OCI-LY7 (cell line): ENCODE measurements at regions of chr3 and their contacts with region 1.

Region 1: GRCh38 chr3:188082031-188082430 is 71.9 kb upstream of the LPP start:
- DNase-seq: no peak
- H3K4me3 ChIP-seq: no peak overlapping the region
- H3K27ac ChIP-seq: no peak overlapping the region
- H3K4me1 ChIP-seq: peaks cover 56% of the 10 kb centered on the region
- CTCF ChIP-seq: no peak

Region 2: GRCh38 chr3:187738331-187739093 is 343.5 kb before region 1 on chr3:
- CTCF ChIA-PET with region 1: interaction called, 4 read pairs
- POLR2A ChIA-PET with region 1: interaction called, 9 read pairs
- intact Hi-C with region 1: loop called (anchors 1 kb)
- DNase-seq: peak; percentile 76
- H3K4me3 ChIP-seq: peak overlapping the region; percentile 86
- H3K27ac ChIP-seq: peak overlapping the region; percentile 90
- H3K4me1 ChIP-seq: peaks cover 60% of the 10 kb centered on the region
- CTCF ChIP-seq: peak; percentile 86

Region 3: GRCh38 chr3:187963677-187964385 is 118.2 kb before region 1 on chr3:
- CTCF ChIA-PET with region 1: no interaction called
- POLR2A ChIA-PET with region 1: interaction called, 174 read pairs
- intact Hi-C with region 1: no loop called
- DNase-seq: peak; percentile 48
- H3K4me3 ChIP-seq: peak overlapping the region; percentile 1
- H3K27ac ChIP-seq: peak overlapping the region; percentile 99
- H3K4me1 ChIP-seq: peaks cover 100% of the 10 kb centered on the region
- CTCF ChIP-seq: no peak

Region 4: DNA sequence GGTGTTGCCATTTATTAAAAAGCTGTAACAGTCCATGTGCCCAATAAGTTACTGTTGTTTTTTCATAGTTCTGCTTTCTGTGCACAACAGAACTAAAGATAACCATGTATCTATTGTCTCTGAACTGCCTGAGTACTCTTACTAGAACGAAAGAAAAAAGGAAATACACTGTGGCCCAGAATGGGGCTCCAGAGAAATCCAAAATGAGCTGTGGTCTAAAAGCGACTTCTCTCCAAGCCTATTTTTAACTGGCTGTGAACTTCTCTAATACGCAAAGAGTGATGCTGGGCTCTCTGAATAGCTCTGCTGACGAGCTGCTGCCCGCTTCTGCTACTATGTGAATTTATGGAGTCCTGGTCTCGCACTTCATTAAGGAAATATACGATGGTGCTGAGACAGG is 15.8 kb after region 1 on chr3:
- CTCF ChIA-PET with region 1: interaction called, 5 read pairs
- POLR2A ChIA-PET with region 1: interaction called, 85 read pairs
- intact Hi-C with region 1: no loop called
- DNase-seq: peak; percentile 90
- H3K4me3 ChIP-seq: peak overlapping the region; percentile 41
- H3K27ac ChIP-seq: peak overlapping the region; percentile 81
- H3K4me1 ChIP-seq: peaks cover 52% of the 10 kb centered on the region
- CTCF ChIP-seq: no peak

Region 5: GRCh38 chr3:188234132-188234531 is 152.1 kb after region 1 on chr3:
- CTCF ChIA-PET with region 1: no interaction called
- POLR2A ChIA-PET with region 1: interaction called, 14 read pairs
- intact Hi-C with region 1: loop called (anchors 1 kb)
- DNase-seq: no peak
- H3K4me3 ChIP-seq: no peak overlapping the region
- H3K27ac ChIP-seq: no peak overlapping the region
- H3K4me1 ChIP-seq: peaks cover 77% of the 10 kb centered on the region
- CTCF ChIP-seq: no peak

Region 6: DNA sequence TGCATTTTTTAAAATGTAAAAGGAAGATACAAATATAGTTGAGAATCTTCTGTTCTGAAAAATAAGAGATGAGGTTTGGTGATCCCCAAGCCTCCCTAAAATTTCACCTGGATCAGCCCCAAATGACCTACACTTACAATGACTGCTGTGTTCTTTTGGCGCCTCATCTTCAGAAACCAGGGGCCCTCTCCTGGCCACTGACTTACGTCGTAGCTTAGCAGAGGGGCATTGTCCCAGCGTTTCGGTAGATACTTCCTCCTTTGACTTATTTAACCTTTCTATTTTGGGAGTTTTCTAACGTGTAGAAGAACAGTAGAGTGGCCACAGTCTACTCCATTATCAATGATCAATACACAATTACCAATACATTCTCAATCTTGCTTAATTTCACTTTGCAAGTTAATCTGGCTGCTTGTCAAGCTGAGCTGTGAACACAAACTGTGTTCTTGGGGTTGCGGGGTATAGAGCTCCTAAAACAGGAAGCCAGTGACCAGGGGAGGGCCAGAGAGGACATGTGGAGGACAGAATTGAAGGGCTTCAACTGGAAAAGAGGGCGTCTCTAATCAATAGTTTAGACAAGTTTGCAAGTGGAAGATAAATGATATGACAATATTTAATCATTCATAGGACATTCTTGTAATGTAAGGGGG is 491.4 kb after region 1 on chr3:
- CTCF ChIA-PET with region 1: no interaction called
- POLR2A ChIA-PET with region 1: no interaction called
- intact Hi-C with region 1: loop called (anchors 5 kb)
- DNase-seq: peak; percentile 46
- H3K4me3 ChIP-seq: no peak overlapping the region
- H3K27ac ChIP-seq: no peak overlapping the region
- H3K4me1 ChIP-seq: peaks cover 24% of the 10 kb centered on the region
- CTCF ChIP-seq: peak; percentile 66